Pancreas (tissue), 10 donors: ENCODE measurements at regions of chr11 and their contacts with region 1.

Region 1: DNA sequence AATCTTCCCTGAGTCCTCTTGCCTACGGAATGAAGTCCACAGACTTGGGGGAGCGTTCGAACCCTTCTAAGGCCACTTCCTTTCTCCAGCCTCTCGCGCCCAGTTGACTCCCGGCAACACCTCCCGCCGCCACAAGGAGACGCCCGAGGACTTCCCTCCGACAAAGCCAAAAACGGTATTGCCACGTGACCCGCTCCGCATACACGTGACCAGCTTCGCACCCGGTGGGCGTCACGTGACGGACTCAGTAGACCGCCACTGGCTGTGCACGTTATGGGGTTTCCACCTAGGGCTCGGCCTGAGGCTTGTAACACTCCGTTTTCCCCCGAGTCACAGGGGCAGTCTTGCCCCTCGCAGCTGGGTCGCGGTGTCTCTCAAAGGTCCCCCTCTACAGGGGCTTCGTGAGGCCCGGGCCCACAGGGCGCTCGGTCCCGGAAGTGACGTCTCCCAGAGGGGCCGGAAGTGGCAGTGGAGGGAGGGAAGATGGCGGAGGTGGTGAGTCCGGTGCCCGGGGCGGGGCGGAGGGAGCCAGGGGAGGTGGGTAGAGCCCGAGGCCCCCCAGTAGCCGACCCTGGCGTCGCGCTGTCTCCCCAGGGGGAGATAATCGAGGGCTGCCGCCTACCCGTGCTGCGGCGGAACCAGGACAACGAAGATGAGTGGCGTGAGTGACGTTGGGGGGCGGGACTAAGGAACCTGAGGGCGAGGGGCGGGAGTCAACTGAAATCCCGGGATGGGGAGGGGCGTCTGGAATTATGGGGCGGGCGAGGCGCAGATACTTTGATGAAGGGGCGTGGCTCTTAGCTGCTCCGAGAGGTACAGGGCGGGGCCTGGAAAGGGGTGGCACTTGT is at the start of gene KAT5:
- DNase-seq: peak; percentile 97 to 99 (median 98)
- ATAC-seq: peak; percentile 88 to 94 (median 92)
- H3K4me3 ChIP-seq: peak within 1 kb of the TSS; percentile 60 to 72 (median 65)
- H3K27ac ChIP-seq: peak within 1 kb of the TSS; percentile 96 to 100 (median 98)
- H3K4me1 ChIP-seq: peaks cover 0 to 9% (median 4%) of the 10 kb centered on the region in 3 donors
- H3K27me3 ChIP-seq: no peaks in the 10 kb centered on the region
- CTCF ChIP-seq: peak; percentile 85 to 97 (median 96)
- total RNA-seq, gene KAT5: 26.5 to 39.8 (median 35.0) TPM

Region 2: GRCh38 chr11:65817835-65818742 is 106.1 kb after region 1 on chr11:
- intact Hi-C with region 1: loop called in 1 of 3 experiments (anchors 5 kb)
- DNase-seq: peak; percentile 89 to 100 (median 96)
- ATAC-seq: peak; percentile 89 to 98 (median 95)
- H3K4me3 ChIP-seq: peak overlapping the region; percentile 43 to 64 (median 52)
- H3K27ac ChIP-seq: peak overlapping the region; percentile 37 to 84 (median 75)
- H3K4me1 ChIP-seq: peaks cover 0 to 15% (median 11%) of the 10 kb centered on the region in 3 donors
- H3K27me3 ChIP-seq: no peaks in the 10 kb centered on the region
- CTCF ChIP-seq: peak; percentile 99 to 100 (median 99)

Region 3: DNA sequence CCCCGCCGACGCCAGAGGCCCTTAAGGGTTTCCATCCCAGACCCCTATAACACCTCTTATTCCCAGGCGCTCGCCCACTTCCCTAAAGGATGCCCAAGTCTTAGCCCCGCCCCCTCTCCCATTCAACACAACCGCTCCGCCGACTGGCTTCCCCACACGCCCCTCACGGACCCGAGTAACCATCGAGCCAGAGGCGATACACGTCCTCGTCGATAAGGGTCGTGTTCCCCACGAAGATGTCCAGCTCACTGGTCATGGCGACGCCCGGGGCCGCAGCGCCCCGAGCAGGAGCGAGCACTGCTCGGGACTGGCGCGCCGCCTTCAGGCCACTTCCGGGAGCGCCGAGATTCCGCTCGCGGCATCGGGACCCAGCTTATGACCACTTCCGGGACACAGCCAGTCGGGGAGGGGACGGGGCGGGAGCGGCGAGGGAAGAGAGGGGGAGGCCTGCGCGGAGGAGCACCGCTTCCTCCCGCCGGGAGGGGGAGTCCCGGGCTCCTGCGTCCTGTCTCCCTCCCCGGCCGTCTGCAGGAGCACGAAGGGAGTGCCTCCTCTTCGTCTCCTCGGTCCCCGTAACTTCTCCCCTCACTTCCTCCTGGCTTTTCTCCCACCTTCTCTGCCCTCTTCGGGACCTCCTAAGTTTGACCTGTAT is 176.3 kb after region 1 on chr11 and contains the start of gene FIBP:
- intact Hi-C with region 1: loop called in 1 of 3 experiments (anchors 5 kb)
- DNase-seq: peak; percentile 97 to 99 (median 98)
- ATAC-seq: peak; percentile 84 to 89 (median 85)
- H3K4me3 ChIP-seq: peak within 1 kb of the TSS; percentile 65 to 82 (median 66)
- H3K27ac ChIP-seq: peak within 1 kb of the TSS; percentile 63 to 93 (median 86)
- H3K4me1 ChIP-seq: peaks cover 7 to 31% (median 11%) of the 10 kb centered on the region in 3 donors
- H3K27me3 ChIP-seq: no peaks in the 10 kb centered on the region
- CTCF ChIP-seq: peak; percentile 75 to 90 (median 90)
- total RNA-seq, gene FIBP: 18.0 to 28.5 (median 22.7) TPM

Region 4: GRCh38 chr11:65981972-65982823 is 270.2 kb after region 1 on chr11:
- intact Hi-C with region 1: loop called in 2 of 3 experiments (anchors 5 to 10 kb)
- DNase-seq: no peak
- ATAC-seq: peak in 1 of 4 donors; percentile 12
- H3K4me3 ChIP-seq: no peak overlapping the region
- H3K27ac ChIP-seq: no peak overlapping the region
- H3K4me1 ChIP-seq: no peaks in the 10 kb centered on the region
- H3K27me3 ChIP-seq: no peaks in the 10 kb centered on the region
- CTCF ChIP-seq: no peak